Dorsolateral prefrontal cortex (tissue), 120 donors: ENCODE measurements at regions of chr9 and their contacts with region 1.

Region 1: GRCh38 chr9:21674894-21675293 is 127.5 kb upstream of the MTAP start:
- DNase-seq: no peak
- H3K4me3 ChIP-seq: no peak overlapping the region
- H3K27ac ChIP-seq: no peak overlapping the region
- H3K27me3 ChIP-seq: peaks cover 0 to 3% (median 0%) of the 10 kb centered on the region in 45 donors
- CTCF ChIP-seq: no peak

Region 2: GRCh38 chr9:21720758-21721157 is 45.9 kb after region 1 on chr9:
- intact Hi-C with region 1: loop called in 1 of 2 experiments (anchors 5 kb)
- DNase-seq: no peak
- H3K4me3 ChIP-seq: no peak overlapping the region
- H3K27ac ChIP-seq: no peak overlapping the region
- H3K27me3 ChIP-seq: peaks cover 0 to 13% (median 0%) of the 10 kb centered on the region in 45 donors
- CTCF ChIP-seq: no peak